Left cardiac atrium (tissue), 4 donors: ENCODE measurements at regions of chr17 and their contacts with region 1.

Region 1: GRCh38 chr17:68035523-68036303 is at the start of gene KPNA2:
- DNase-seq: peak; percentile 95
- ATAC-seq: peak; percentile 98
- total RNA-seq, gene KPNA2: 21.8 to 40.2 TPM

Region 2: DNA sequence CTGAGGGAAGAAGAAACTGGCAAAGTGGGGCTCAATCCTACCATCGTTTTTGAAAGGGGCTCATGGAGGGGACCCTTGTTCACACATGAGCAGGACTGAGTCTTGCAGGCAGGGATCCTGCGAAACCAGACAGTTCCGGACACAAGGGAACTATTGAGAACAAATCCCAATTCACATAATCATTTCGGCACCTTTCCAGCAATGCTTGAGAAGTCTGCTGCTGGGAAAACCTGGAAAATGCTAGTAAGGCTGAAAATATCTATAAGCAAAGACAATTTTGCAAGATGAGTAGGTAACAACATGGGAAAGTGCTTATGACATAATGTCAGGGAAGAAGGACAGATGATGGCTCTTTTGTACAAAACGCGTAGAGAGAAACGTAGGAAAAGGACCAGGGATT is 262.5 kb before region 1 on chr17:
- intact Hi-C with region 1: no loop called
- DNase-seq: no peak
- ATAC-seq: no peak

Region 3: GRCh38 chr17:67922503-67922902 is 113.2 kb before region 1 on chr17:
- intact Hi-C with region 1: no loop called
- DNase-seq: no peak
- ATAC-seq: peak; percentile 23 to 51

Region 4: GRCh38 chr17:68019675-68020408 is 15.9 kb before region 1 on chr17:
- intact Hi-C with region 1: no loop called
- DNase-seq: peak; percentile 94
- ATAC-seq: peak; percentile 96 to 98

Region 5: GRCh38 chr17:68101075-68101992 is 65.6 kb after region 1 on chr17:
- intact Hi-C with region 1: loop called in 1 of 2 experiments (anchors 5 kb)
- DNase-seq: peak; percentile 98
- ATAC-seq: peak; percentile 99 to 100